ENCODE measurements at regions of chr6 and their contacts with region 1.

Region 1: DNA sequence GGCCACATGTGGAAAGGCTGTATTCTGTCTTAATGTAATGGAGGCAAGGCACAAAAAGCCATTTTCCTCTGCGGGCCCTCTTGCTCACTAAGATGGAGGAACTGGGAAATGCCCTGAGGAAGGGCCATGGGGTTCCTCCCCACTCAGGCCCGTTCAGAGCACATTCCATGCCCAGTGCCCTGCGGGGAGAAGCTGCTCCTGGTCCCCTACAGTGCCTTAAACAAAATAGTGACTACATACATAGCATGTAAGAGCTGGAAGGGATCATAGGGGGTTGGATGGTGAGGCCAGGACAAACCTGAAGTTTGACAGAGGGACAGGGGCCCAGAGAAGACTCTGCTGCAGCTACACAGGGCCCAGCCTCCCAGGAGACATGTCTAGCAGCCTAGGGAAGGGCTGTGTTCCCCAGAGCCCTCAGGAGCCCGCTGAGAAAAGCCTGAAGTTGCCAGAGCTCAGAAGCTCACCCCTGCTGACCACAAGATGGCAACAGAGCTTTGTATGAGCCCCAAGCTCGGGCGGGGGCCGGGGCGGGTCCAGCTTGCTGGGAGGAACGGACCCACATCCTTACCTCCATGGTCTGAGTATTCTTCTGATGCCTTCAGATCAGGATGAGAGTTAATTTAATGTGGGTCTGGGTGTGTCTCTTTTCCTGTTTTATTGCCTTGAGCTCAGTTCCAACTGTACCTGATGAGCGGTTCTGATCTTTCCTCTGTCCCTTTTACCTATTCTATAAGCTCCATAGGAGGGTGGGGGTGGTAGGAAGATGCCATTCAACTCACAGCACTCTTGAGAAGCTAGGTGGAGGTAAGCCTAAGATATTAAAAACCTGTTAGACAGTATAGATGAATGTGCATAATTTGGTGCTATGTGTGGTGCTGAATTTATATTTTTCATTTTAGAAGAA is 242.9 kb downstream of the CDC5L start:
- DNase-seq: peak; percentile 23
- H3K4me3 ChIP-seq: no peak overlapping the region
- H3K27ac ChIP-seq: no peak overlapping the region
- H3K27me3 ChIP-seq: peaks cover 20% of the 10 kb centered on the region
- CTCF ChIP-seq: peak; percentile 71

Region 2: DNA sequence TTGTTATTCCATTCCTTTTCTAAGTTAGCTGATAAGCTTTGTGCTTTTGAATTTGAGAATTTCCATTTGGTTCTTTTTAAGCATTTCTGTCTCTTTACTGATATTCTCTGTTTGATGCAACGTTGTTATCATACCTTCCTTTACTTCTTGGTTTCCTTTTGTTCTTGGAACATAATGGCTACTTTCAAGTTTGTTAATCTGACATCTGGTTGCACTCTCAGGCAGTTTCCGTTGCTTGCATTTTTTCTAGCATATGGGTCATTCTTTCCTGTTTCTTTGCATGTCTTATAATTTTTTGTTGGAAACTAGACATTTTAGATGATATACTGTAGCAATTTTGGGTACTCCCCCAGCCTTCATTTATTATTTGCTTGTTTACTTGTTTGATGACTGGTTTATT is 230.4 kb before region 1 on chr6:
- CTCF ChIA-PET with region 1: no interaction called
- POLR2A ChIA-PET with region 1: no interaction called
- DNase-seq: no peak
- H3K4me3 ChIP-seq: no peak overlapping the region
- H3K27ac ChIP-seq: no peak overlapping the region
- H3K27me3 ChIP-seq: no peaks in the 10 kb centered on the region
- CTCF ChIP-seq: no peak

Region 3: DNA sequence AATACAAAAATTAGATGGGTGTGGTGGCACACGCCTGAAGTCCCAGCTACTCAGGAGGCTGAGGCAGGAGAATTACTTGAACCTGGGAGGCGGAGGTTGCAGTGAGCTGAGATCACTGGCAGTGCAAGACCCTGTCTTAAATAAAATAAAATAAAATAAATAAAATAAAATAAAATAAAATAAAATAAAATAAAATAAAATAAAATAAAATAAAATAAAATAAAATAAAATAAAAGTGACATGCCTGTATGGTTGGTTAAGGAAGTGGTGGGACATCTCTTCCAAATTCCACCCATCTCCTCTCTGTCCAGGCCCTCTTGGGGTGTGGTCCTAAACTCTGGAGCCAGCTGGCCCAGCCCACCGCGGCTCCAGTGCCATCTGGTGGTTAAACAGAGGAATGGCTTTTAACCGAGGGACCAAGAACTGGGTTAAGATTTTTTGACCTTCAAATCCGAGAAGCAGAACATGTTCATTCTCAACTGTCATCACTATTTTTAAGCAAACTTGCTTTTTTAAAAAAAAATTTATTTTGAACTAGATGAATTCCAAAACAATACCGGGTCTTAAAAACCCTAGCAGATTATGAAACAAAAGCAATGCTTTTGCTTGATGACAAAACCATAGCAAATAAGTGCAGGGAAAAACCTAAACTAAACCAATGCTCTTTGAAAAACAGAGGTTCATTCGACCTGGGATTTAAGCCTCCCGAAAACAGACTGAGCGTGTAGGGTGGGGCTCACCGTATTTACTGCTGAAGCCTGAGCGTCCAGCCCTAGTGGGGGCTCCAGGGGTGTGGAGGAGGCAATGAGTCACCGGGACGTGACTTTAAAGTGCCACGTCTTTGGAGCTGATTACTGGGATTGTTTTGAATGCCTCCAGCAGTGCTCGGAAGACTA is 174.1 kb before region 1 on chr6:
- CTCF ChIA-PET with region 1: no interaction called
- POLR2A ChIA-PET with region 1: no interaction called
- DNase-seq: no peak
- H3K4me3 ChIP-seq: no peak overlapping the region
- H3K27ac ChIP-seq: no peak overlapping the region
- H3K27me3 ChIP-seq: no peaks in the 10 kb centered on the region
- CTCF ChIP-seq: peak; percentile 93

Region 4: DNA sequence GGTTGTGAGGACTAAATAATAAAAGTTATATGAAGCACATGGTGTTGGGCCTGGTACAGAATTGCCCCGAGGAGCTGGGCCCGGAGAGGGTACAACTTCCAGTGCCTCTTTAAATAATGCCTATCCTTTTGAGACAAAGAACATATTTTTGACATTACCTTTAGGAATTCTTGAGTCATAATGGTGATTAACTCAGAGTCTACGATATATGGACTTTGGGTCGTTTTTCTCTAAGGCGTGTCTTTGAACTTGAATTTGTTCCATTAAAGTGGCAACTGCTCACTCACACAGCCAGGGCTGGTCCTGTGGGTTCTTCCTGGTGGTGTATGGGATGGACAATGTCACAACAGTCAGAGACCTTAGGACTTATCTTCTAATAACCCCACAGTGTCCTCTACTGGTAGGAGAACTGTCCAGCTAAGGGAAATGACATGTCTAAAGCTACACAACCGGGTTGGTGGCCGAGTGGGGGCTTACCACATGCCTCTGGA is 136.3 kb before region 1 on chr6:
- CTCF ChIA-PET with region 1: no interaction called
- POLR2A ChIA-PET with region 1: no interaction called
- DNase-seq: peak; percentile 15
- H3K4me3 ChIP-seq: no peak overlapping the region
- H3K27ac ChIP-seq: no peak overlapping the region
- H3K27me3 ChIP-seq: peaks cover 13% of the 10 kb centered on the region
- CTCF ChIP-seq: peak; percentile 32

Region 5: DNA sequence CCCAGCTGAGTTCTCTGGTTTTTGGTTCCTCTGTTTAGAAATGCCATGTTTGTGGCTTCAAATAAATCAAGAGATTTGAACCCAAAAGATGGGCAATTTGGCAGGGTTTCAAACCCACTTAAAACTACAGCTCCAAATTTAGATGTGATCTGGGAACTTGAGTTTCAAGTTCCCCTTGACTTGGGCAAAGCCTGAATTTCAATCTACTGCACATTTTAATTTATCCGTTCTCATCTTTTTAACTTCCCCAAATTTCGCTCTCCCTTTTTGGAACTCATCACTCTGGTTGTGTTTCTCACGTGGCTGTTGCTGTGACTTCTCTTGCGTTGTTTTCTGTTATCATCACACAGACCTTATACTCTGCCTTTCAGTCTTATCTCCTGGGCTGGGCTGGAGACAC is 12.0 kb before region 1 on chr6:
- CTCF ChIA-PET with region 1: interaction called, 12 read pairs
- POLR2A ChIA-PET with region 1: no interaction called
- DNase-seq: no peak
- H3K4me3 ChIP-seq: no peak overlapping the region
- H3K27ac ChIP-seq: no peak overlapping the region
- H3K27me3 ChIP-seq: peaks cover 21% of the 10 kb centered on the region
- CTCF ChIP-seq: no peak

Region 6: GRCh38 chr6:45421709-45422502 is 791.5 kb after region 1 on chr6:
- CTCF ChIA-PET with region 1: interaction called, 12 read pairs
- POLR2A ChIA-PET with region 1: no interaction called
- DNase-seq: no peak
- H3K4me3 ChIP-seq: peak overlapping the region; percentile 94
- H3K27ac ChIP-seq: peak overlapping the region; percentile 75
- H3K27me3 ChIP-seq: no peaks in the 10 kb centered on the region
- CTCF ChIP-seq: peak; percentile 55

Region 7: DNA sequence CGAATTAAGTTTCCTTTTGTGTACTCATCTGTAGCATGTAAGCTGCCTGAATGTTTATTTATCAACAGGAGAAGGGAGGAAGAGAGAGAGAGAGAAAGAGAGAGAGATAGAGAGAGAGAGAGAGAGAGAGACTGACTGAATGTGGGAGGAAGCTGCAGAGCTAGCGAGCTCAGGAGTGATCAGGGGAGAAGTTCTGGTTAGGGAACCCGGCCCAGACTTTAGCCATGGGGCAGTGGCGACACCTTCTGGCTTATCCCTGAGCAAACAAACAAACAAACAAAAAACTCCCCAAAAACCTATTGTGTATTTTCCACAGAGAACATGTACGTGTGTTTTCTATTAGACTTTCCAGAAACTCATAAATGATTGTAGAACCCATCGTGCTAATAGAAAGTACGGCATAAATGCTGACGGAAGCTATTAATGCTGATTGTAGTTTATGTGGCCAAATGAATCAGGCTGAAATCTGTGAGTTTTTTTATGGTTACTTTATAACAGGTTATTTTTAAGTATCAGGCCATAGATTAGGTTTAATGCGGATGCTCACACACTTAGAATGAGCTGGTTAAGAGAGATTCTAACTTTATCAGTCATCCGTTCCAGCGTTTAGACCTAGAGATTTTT is 1292.5 kb after region 1 on chr6:
- CTCF ChIA-PET with region 1: interaction called, 39 read pairs
- POLR2A ChIA-PET with region 1: no interaction called
- DNase-seq: peak; percentile 16
- H3K4me3 ChIP-seq: no peak overlapping the region
- H3K27ac ChIP-seq: no peak overlapping the region
- H3K27me3 ChIP-seq: no peaks in the 10 kb centered on the region
- CTCF ChIP-seq: peak; percentile 77